Activated CD8-positive, alpha-beta T cell treated with anti-CD3 and anti-CD28 coated beads for 36 hours (primary cell): ENCODE measurements at regions of chr12 and their contacts with region 1.

Region 1: GRCh38 chr12:102169922-102170621 is 27.6 kb downstream of the PMCH start:
- DNase-seq: peak; percentile 26
- ATAC-seq: peak; percentile 82
- H3K4me3 Mint-ChIP-seq: no peak overlapping the region
- H3K27ac Mint-ChIP-seq: no peak overlapping the region
- H3K4me1 Mint-ChIP-seq: peaks cover 11% of the 10 kb centered on the region
- H3K27me3 Mint-ChIP-seq: no peaks in the 10 kb centered on the region
- CTCF ChIP-seq: peak; percentile 69

Region 2: GRCh38 chr12:102182635-102183034 is 12.6 kb after region 1 on chr12:
- CTCF ChIA-PET with region 1: interaction called, 13 read pairs
- POLR2A ChIA-PET with region 1: no interaction called
- intact Hi-C with region 1: no loop called
- DNase-seq: no peak
- ATAC-seq: no peak
- H3K4me3 Mint-ChIP-seq: no peak overlapping the region
- H3K27ac Mint-ChIP-seq: no peak overlapping the region
- H3K4me1 Mint-ChIP-seq: no peaks in the 10 kb centered on the region
- H3K27me3 Mint-ChIP-seq: no peaks in the 10 kb centered on the region
- CTCF ChIP-seq: no peak